Endothelial cell of umbilical vein (primary cell): ENCODE measurements at regions of chr1 and their contacts with region 1.

Region 1: GRCh38 chr1:156480411-156481192 is 20.0 kb downstream of the MEF2D start:
- DNase-seq: peak; percentile 55
- H3K4me3 ChIP-seq: no peak overlapping the region
- H3K27ac ChIP-seq: no peak overlapping the region
- H3K4me1 ChIP-seq: peaks cover 8% of the 10 kb centered on the region
- H3K27me3 ChIP-seq: no peaks in the 10 kb centered on the region
- CTCF ChIP-seq: peak; percentile 67 to 87
- POLR2A ChIP-seq: no peak

Region 2: GRCh38 chr1:156461781-156462647 is 18.6 kb before region 1 on chr1:
- CTCF ChIA-PET with region 1: interaction called, 19 read pairs
- POLR2A ChIA-PET with region 1: no interaction called
- dilution Hi-C with region 1: no loop called
- intact Hi-C with region 1: no loop called
- DNase-seq: no peak
- H3K4me3 ChIP-seq: no peak overlapping the region
- H3K27ac ChIP-seq: no peak overlapping the region
- H3K4me1 ChIP-seq: peaks cover 16% of the 10 kb centered on the region
- H3K27me3 ChIP-seq: no peaks in the 10 kb centered on the region
- CTCF ChIP-seq: no peak
- POLR2A ChIP-seq: no peak

Region 3: GRCh38 chr1:156517746-156518145 is 37.1 kb after region 1 on chr1:
- CTCF ChIA-PET with region 1: interaction called, 22 read pairs
- POLR2A ChIA-PET with region 1: no interaction called
- dilution Hi-C with region 1: no loop called
- intact Hi-C with region 1: no loop called
- DNase-seq: no peak
- H3K4me3 ChIP-seq: no peak overlapping the region
- H3K27ac ChIP-seq: no peak overlapping the region
- H3K4me1 ChIP-seq: no peaks in the 10 kb centered on the region
- H3K27me3 ChIP-seq: no peaks in the 10 kb centered on the region
- CTCF ChIP-seq: no peak
- POLR2A ChIP-seq: no peak

Region 4: GRCh38 chr1:156540791-156541383 is 60.3 kb after region 1 on chr1:
- CTCF ChIA-PET with region 1: interaction called, 19 read pairs
- POLR2A ChIA-PET with region 1: no interaction called
- dilution Hi-C with region 1: no loop called
- intact Hi-C with region 1: no loop called
- DNase-seq: no peak
- H3K4me3 ChIP-seq: no peak overlapping the region
- H3K27ac ChIP-seq: no peak overlapping the region
- H3K4me1 ChIP-seq: no peaks in the 10 kb centered on the region
- H3K27me3 ChIP-seq: no peaks in the 10 kb centered on the region
- CTCF ChIP-seq: no peak
- POLR2A ChIP-seq: no peak

Region 5: DNA sequence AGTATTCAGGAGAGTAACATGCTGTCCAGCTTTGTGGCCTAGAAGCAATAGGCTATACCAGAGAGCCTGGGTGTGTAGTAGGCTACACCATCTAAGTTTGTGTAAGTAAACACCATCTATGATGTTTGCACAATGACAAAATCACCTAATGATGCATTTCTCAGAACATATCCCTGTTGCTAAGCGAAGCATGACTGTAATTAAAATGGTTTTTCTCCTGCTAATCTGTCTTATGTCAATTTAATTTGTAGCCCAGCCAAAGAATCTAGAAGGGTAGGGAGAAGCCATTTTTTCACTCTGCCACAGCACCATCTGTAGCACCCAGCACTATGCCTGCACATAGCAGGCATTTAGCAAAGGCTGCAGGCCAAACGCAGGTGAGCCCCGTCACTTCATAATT is 96.9 kb after region 1 on chr1:
- CTCF ChIA-PET with region 1: interaction called, 42 read pairs
- POLR2A ChIA-PET with region 1: no interaction called
- dilution Hi-C with region 1: no loop called
- intact Hi-C with region 1: loop called (anchors 2 kb)
- DNase-seq: no peak
- H3K4me3 ChIP-seq: no peak overlapping the region
- H3K27ac ChIP-seq: no peak overlapping the region
- H3K4me1 ChIP-seq: no peaks in the 10 kb centered on the region
- H3K27me3 ChIP-seq: peaks cover 5 to 6% of the 10 kb centered on the region in 2 experiments
- CTCF ChIP-seq: no peak
- POLR2A ChIP-seq: no peak

Region 6: DNA sequence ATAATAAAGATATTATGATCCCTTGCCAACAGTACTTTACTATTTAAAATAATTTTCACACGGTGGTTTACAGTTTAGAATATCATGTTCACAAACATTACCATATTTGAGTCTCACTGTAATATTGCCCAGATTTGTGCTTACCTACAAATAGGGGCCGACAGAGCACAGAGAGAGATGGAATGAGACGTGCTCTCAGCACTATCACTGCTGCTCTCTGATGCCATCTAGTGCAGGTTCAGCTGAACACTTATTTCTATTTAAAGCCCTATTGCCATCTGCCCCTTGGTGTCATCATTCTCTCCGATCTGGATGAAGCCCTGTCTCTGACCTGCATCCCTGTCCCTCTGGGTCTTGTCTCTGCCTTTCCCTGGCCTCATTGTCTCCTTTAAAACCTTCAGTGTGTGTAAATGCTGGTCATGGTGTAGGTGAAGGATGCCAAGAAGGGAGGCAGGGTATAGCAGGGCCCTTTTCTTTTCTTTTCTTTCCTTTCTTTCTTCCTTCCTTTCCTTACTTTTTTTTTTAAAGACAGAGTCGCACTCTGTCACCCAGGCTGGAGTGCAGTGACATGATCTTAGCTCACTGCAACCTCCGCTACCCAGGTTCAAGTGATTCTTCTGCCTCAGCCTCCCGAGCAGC is 127.6 kb after region 1 on chr1:
- CTCF ChIA-PET with region 1: interaction called, 25 read pairs
- POLR2A ChIA-PET with region 1: no interaction called
- dilution Hi-C with region 1: no loop called
- intact Hi-C with region 1: loop called (anchors 1 kb)
- DNase-seq: peak; percentile 78
- H3K4me3 ChIP-seq: no peak overlapping the region
- H3K27ac ChIP-seq: no peak overlapping the region
- H3K4me1 ChIP-seq: no peaks in the 10 kb centered on the region
- H3K27me3 ChIP-seq: peaks cover 6 to 9% of the 10 kb centered on the region in 2 experiments
- CTCF ChIP-seq: peak; percentile 71 to 78
- POLR2A ChIP-seq: no peak